HCT116 (cell line): ENCODE measurements at regions of chr12 and their contacts with region 1.

Region 1: GRCh38 chr12:53251477-53252348 is 16.4 kb upstream of the ESPL1 start:
- DNase-seq: peak; percentile 48
- ATAC-seq: peak; percentile 83
- H3K4me3 ChIP-seq: peak overlapping the region; percentile 91 to 97
- H3K27ac ChIP-seq: peak overlapping the region; percentile 85
- H3K4me1 ChIP-seq: peaks cover 15 to 23% of the 10 kb centered on the region in 2 experiments
- H3K27me3 ChIP-seq: no peaks in the 10 kb centered on the region
- CTCF ChIP-seq: peak; percentile 33 to 72 (median 42); a peak in 4 of 6 replicates
- POLR2A ChIP-seq: peak; percentile 37
- RAD21 ChIP-seq: peak; percentile 84

Region 2: GRCh38 chr12:52774629-52775250 is 477.0 kb before region 1 on chr12:
- CTCF ChIA-PET with region 1: no interaction called
- POLR2A ChIA-PET with region 1: no interaction called
- RAD21 ChIA-PET with region 1: no interaction called
- intact Hi-C with region 1: no loop called
- DNase-seq: no peak
- ATAC-seq: no peak
- H3K4me3 ChIP-seq: no peak overlapping the region
- H3K27ac ChIP-seq: no peak overlapping the region
- H3K4me1 ChIP-seq: no peaks in the 10 kb centered on the region
- H3K27me3 ChIP-seq: peaks cover 26% of the 10 kb centered on the region; the same call in 1 of the 2 replicates
- CTCF ChIP-seq: no peak
- POLR2A ChIP-seq: no peak
- RAD21 ChIP-seq: no peak

Region 3: GRCh38 chr12:53213348-53213747 is 38.4 kb before region 1 on chr12:
- CTCF ChIA-PET with region 1: interaction called, 22 read pairs
- POLR2A ChIA-PET with region 1: no interaction called
- RAD21 ChIA-PET with region 1: interaction called, 4 to 8 read pairs
- intact Hi-C with region 1: loop called (anchors 1 kb)
- DNase-seq: no peak
- ATAC-seq: peak; percentile 83
- H3K4me3 ChIP-seq: no peak overlapping the region
- H3K27ac ChIP-seq: no peak overlapping the region; the same call in 1 of the 2 replicates
- H3K4me1 ChIP-seq: peaks cover 20 to 24% of the 10 kb centered on the region in 2 experiments
- H3K27me3 ChIP-seq: no peaks in the 10 kb centered on the region
- CTCF ChIP-seq: peak in 2 of 3 experiments; percentile 89 to 97; a peak in 4 of 6 replicates
- POLR2A ChIP-seq: no peak
- RAD21 ChIP-seq: no peak

Region 4: DNA sequence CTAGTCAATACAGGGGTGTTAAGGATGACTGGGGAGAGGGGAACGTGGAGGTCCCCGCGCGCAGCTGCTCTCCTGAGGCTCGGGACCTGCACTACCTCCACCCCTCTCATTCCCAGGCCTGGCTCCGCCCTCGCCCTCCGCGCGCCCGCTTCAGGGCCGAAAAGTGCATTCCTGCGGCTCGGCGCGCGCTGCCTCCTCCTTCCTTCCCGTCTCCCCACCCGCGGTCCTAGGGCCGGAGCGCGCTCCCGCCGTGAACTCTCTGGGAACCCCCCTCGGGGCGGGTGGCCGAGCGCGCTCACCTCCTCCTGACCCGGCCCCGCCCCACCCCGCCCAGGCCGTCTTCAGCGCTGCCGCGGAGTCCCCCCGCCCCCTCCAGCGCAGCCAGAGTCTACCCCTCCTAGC is 30.9 kb before region 1 on chr12:
- CTCF ChIA-PET with region 1: interaction called, 8 read pairs
- POLR2A ChIA-PET with region 1: no interaction called
- RAD21 ChIA-PET with region 1: interaction called, 3 read pairs
- intact Hi-C with region 1: loop called (anchors 2 kb)
- DNase-seq: peak; percentile 83
- ATAC-seq: peak; percentile 77
- H3K4me3 ChIP-seq: peak overlapping the region; percentile 72 to 88
- H3K27ac ChIP-seq: peak overlapping the region; percentile 99
- H3K4me1 ChIP-seq: peaks cover 58 to 87% of the 10 kb centered on the region in 2 experiments
- H3K27me3 ChIP-seq: no peaks in the 10 kb centered on the region
- CTCF ChIP-seq: no peak
- POLR2A ChIP-seq: peak; percentile 4
- RAD21 ChIP-seq: no peak

Region 5: DNA sequence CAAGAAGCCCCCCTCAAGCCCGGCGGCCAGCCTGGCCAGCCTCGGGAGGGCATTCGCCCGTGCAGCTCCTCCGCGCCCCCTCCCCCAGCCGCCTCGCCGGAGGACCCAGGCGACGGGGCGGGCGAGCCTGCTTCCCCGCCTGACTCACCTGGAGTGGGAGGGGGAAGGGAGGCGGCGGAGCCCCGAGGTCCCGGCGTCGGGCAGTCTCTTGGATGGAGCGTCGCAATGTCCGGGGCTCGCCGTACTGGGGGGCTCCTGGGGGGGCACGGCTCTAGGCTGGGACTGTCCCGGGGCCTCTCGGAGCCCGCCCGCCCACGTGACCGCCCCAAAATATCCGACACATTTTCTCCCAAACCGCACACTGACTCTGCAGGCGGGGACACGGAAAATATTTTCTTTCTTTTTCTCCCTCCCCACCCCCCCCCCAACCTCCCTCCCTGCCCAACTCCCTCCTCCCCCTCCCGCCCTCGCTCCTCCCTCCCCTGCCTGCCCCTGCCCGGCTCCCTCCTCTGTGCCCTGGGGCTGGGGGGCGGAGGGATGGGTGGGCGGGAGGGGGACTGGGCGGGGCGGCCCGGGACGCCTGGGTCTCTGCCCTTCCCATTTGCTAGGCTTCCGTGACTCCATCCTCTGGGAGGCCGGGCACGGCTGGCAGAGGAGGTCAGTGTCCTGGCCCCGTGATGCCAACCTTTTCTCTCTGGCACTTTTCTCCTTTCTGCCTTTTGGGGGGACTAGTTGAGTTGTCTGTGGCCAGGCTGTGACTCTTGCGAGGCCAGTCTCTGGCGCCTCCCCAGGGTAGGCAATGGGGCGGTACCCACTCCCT is 19.7 kb before region 1 on chr12 and contains the start of gene RARG:
- CTCF ChIA-PET with region 1: interaction called, 3 read pairs
- POLR2A ChIA-PET with region 1: no interaction called
- RAD21 ChIA-PET with region 1: no interaction called
- intact Hi-C with region 1: loop called (anchors 2 kb)
- DNase-seq: no peak
- ATAC-seq: peak; percentile 76
- H3K4me3 ChIP-seq: peak within 1 kb of the TSS; percentile 57 to 76
- H3K27ac ChIP-seq: peak within 1 kb of the TSS; percentile 89
- H3K4me1 ChIP-seq: peaks cover 55 to 86% of the 10 kb centered on the region in 2 experiments
- H3K27me3 ChIP-seq: no peaks in the 10 kb centered on the region
- CTCF ChIP-seq: no peak
- POLR2A ChIP-seq: no peak
- RAD21 ChIP-seq: no peak
- total RNA-seq, gene RARG: 68.9 TPM